RWPE1 (cell line): ENCODE measurements at regions of chr15 and their contacts with region 1.

Region 1: GRCh38 chr15:65318870-65319356 is 14.4 kb downstream of the RNU5B-1 start:
- DNase-seq: peak; percentile 90
- H3K27ac ChIP-seq: no peak overlapping the region
- CTCF ChIP-seq: peak; percentile 96

Region 2: GRCh38 chr15:65101411-65101890 is 217.5 kb before region 1 on chr15:
- CTCF ChIA-PET with region 1: no interaction called
- POLR2A ChIA-PET with region 1: no interaction called
- DNase-seq: peak; percentile 20
- H3K27ac ChIP-seq: no peak overlapping the region
- CTCF ChIP-seq: peak; percentile 59

Region 3: DNA sequence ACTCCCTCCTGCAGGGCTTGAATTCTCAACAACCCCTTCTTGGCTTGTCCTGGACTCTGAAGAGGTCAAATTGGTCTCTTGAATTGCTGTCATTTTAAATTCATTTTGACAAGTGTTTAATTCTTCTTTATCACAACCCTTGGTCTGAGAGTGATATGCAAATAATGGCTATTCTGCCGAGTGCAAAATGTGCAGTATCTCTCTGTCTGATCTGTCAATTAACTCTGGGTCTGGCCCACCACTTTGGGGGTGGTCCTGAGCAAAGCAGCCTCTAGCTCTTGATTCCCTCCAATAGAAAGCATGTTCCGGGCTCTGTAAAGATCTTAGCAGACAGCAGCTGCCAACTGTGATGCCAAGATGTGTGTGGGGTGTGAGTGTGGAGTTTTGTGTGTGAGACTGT is 61.1 kb after region 1 on chr15:
- CTCF ChIA-PET with region 1: interaction called, 33 read pairs
- POLR2A ChIA-PET with region 1: no interaction called
- DNase-seq: no peak
- H3K27ac ChIP-seq: no peak overlapping the region
- CTCF ChIP-seq: no peak

Region 4: DNA sequence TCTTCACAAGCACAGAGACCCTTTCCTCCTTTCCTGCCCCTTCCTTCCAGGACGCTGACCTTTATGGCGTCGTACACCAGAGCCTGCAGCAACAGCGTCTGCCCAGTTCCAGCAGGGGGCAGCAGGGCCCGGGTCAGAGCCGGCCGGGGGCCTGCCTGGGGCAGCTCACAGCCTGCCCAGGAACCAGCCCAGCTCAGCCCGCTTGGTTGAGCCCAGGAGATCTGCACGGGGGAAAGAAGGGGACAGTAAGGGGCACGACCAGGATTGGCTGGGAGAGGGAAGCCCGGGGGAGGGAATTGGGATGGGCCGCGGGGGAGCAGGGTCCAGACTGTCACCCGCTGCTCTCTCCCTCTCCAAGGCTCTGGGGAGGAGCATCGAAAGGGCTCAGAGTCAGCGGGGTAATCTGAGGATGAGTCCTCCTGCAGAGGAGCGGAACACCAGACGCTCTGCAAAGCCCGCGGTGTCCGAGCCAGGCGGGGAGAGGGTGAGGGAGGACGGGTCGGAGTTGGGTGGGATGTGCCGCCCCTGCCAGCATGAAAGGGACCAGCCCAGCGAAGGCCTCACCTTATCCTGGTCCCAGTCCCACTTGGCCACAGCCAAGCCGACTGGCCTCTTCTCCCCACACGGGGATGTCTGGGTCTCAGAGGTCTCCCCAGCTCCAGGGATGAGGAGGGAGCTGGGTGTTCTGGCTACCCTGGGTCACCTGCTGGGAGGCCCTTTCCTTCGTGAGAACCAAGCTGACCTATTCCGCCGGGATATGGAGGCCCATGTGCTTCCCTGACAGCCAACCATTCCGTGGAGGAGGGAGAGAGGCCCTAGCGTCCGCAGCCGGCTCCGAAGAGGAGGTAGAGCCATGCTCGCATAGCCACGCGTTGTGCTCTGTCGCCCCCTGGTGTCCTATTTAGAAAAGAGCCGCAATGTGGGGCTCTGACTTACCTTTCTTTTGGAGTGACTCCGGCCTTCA is 66.3 kb after region 1 on chr15:
- CTCF ChIA-PET with region 1: interaction called, 33 read pairs
- POLR2A ChIA-PET with region 1: no interaction called
- DNase-seq: peak; percentile 89
- H3K27ac ChIP-seq: peak overlapping the region; percentile 19
- CTCF ChIP-seq: peak; percentile 90

Region 5: GRCh38 chr15:65970937-65971740 is 652.2 kb after region 1 on chr15:
- CTCF ChIA-PET with region 1: no interaction called
- POLR2A ChIA-PET with region 1: no interaction called
- DNase-seq: no peak
- H3K27ac ChIP-seq: no peak overlapping the region
- CTCF ChIP-seq: no peak